ENCODE measurements at regions of chr10 and their contacts with region 1.

Region 1: GRCh38 chr10:114110174-114110972 is 63.6 kb downstream of the CCDC186 start:
- DNase-seq: no peak
- H3K4me3 ChIP-seq: no peak overlapping the region
- H3K4me3 Mint-ChIP-seq: no peak overlapping the region
- H3K27ac ChIP-seq: no peak overlapping the region
- H3K27ac Mint-ChIP-seq: peak overlapping the region in 1 of 7 donors; percentile 45
- H3K4me1 ChIP-seq: peaks cover 0 to 11% of the 10 kb centered on the region in 2 donors
- H3K4me1 Mint-ChIP-seq: peaks cover 10% of the 10 kb centered on the region
- H3K27me3 ChIP-seq: no peaks in the 10 kb centered on the region
- H3K27me3 Mint-ChIP-seq: no peaks in the 10 kb centered on the region
- CTCF ChIP-seq: no peak

Region 2: GRCh38 chr10:113704637-113705343 is 405.6 kb before region 1 on chr10:
- intact Hi-C with region 1: loop called in 1 of 2 experiments (anchors 10 kb)
- DNase-seq: peak in 1 of 3 donors; percentile 17
- H3K4me3 ChIP-seq: no peak overlapping the region
- H3K4me3 Mint-ChIP-seq: no peak overlapping the region
- H3K27ac ChIP-seq: no peak overlapping the region
- H3K27ac Mint-ChIP-seq: no peak overlapping the region
- H3K4me1 ChIP-seq: no peaks in the 10 kb centered on the region
- H3K4me1 Mint-ChIP-seq: peaks cover 5% of the 10 kb centered on the region
- H3K27me3 ChIP-seq: no peaks in the 10 kb centered on the region
- H3K27me3 Mint-ChIP-seq: peaks cover 0 to 2% (median 0%) of the 10 kb centered on the region in 3 donors
- CTCF ChIP-seq: peak; percentile 58

Measured in CD14-positive monocyte (primary cell).